Motor neuron (in vitro differentiated cells): ENCODE measurements at regions of chr1 and their contacts with region 1.

Region 1: DNA sequence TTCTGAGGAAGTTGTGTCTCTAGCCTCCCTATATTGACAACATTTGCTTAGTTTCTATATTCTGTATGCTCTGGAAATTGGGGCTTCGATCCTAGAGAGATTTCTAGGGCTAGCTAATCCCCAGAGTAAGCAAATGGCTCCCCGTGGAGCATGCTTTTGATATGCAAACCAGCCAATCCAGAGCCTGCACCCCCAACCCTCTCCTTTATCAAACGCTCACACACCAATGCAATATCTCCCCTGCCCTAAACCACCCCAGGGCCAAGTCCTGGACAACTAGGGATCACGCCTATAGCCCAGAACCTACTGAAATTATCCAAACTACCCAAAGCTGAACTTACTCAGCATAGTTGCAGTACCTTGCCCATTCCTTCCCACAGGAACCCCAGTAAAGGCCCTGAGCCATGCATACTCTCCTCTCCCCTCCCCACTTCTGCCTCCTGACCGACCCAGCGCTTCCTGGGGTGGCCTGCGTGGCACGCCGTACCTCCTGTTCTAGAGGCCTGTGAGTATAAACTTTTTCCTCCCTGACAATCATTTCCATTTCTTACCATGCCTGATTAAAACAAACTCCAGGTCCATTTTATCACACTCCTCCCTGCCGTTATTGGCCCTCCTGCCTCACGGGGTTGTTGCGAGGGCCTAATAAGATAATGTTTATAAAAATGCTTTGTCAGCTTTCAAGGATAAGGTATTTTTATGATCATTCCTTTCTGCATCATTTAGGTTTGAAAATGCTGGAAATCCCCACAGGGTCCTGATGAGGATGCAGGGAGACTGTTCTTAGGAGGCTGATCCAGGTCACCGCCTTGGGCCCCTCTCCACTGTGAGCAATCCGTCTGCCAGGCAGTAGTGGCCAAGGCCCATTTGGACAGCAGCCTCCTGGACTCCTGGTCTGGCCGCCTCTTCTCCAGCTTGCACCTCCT is 102.7 kb downstream of the TENT5C start:
- ATAC-seq: no peak
- H3K4me3 ChIP-seq: no peak overlapping the region
- H3K27ac ChIP-seq: no peak overlapping the region
- H3K4me1 ChIP-seq: no peaks in the 10 kb centered on the region

Region 2: GRCh38 chr1:117562581-117563520 is 145.7 kb before region 1 on chr1:
- in situ Hi-C with region 1: loop called in 1 of 9 experiments (anchors 10 kb)
- ATAC-seq: peak in 2 of 8 experiments; percentile 52 to 69
- H3K4me3 ChIP-seq: no peak overlapping the region
- H3K27ac ChIP-seq: no peak overlapping the region
- H3K4me1 ChIP-seq: no peaks in the 10 kb centered on the region